ENCODE measurements at regions of chr12 and their contacts with region 1.

Region 1: GRCh38 chr12:56117778-56118687 is at the start of gene ZC3H10:
- DNase-seq: peak; percentile 89
- ATAC-seq: peak; percentile 76
- H3K4me3 Mint-ChIP-seq: peak within 1 kb of the TSS; percentile 100
- H3K27ac Mint-ChIP-seq: peak within 1 kb of the TSS; percentile 99
- H3K4me1 Mint-ChIP-seq: peaks cover 37% of the 10 kb centered on the region
- H3K27me3 Mint-ChIP-seq: no peaks in the 10 kb centered on the region
- CTCF ChIP-seq: no peak
- total RNA-seq, gene ZC3H10: 15.4 and 17.1 TPM in 2 replicates

Region 2: GRCh38 chr12:55973598-55974307 is 144.3 kb before region 1 on chr12 and contains the start of gene RAB5B:
- CTCF ChIA-PET with region 1: no interaction called
- POLR2A ChIA-PET with region 1: interaction called, 7 read pairs
- intact Hi-C with region 1: loop called (anchors 2 kb)
- DNase-seq: peak; percentile 83
- ATAC-seq: peak; percentile 87
- H3K4me3 Mint-ChIP-seq: no peak within 1 kb of the TSS
- H3K27ac Mint-ChIP-seq: no peak within 1 kb of the TSS
- H3K4me1 Mint-ChIP-seq: peaks cover 27% of the 10 kb centered on the region
- H3K27me3 Mint-ChIP-seq: no peaks in the 10 kb centered on the region
- CTCF ChIP-seq: no peak
- total RNA-seq, gene RAB5B: 82.1 and 83.8 TPM in 2 replicates

Region 3: GRCh38 chr12:55985341-55985740 is 132.7 kb before region 1 on chr12:
- CTCF ChIA-PET with region 1: no interaction called
- POLR2A ChIA-PET with region 1: no interaction called
- intact Hi-C with region 1: no loop called
- DNase-seq: no peak
- ATAC-seq: no peak
- H3K4me3 Mint-ChIP-seq: no peak overlapping the region
- H3K27ac Mint-ChIP-seq: no peak overlapping the region
- H3K4me1 Mint-ChIP-seq: peaks cover 25% of the 10 kb centered on the region
- H3K27me3 Mint-ChIP-seq: no peaks in the 10 kb centered on the region
- CTCF ChIP-seq: no peak

Region 4: GRCh38 chr12:56029666-56030293 is 88.3 kb before region 1 on chr12:
- CTCF ChIA-PET with region 1: no interaction called
- POLR2A ChIA-PET with region 1: no interaction called
- intact Hi-C with region 1: no loop called
- DNase-seq: no peak
- ATAC-seq: peak; percentile 71
- H3K4me3 Mint-ChIP-seq: no peak overlapping the region
- H3K27ac Mint-ChIP-seq: no peak overlapping the region
- H3K4me1 Mint-ChIP-seq: no peaks in the 10 kb centered on the region
- H3K27me3 Mint-ChIP-seq: no peaks in the 10 kb centered on the region
- CTCF ChIP-seq: no peak

Region 5: DNA sequence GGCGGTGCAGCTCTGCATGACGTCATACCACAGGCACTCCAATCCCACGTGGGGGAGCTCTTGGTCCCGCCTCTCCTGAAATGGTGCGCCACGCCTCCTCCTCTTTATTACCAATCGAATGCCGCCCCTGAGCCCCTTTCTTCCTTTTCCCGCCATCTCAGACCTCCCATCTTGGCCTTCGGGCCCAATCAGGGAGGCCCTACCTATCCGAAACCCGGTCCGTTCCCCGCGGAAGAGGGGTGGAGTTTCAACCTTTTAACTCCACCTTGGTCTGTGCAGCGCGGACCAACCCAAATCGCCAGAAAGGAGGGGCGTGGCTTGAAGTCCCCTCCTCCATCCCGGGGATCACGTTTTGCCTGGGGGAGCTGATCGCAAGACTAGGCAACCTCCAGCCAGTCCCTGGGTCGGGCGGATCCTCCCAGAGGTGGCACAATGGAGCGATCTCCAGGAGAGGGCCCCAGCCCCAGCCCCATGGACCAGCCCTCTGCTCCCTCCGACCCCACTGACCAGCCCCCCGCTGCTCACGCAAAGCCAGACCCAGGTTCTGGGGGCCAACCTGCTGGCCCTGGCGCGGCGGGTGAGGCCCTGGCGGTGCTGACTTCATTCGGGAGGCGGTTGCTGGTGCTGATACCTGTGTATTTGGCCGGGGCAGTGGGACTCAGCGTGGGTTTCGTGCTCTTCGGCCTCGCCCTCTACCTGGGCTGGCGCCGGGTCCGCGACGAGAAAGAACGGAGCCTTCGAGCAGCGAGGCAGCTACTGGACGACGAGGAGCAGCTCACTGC is 10.0 kb after region 1 on chr12 and contains the start of gene ESYT1:
- CTCF ChIA-PET with region 1: interaction called, 18 read pairs
- POLR2A ChIA-PET with region 1: interaction called, 104 read pairs
- intact Hi-C with region 1: loop called (anchors 1 kb)
- DNase-seq: peak; percentile 83
- ATAC-seq: peak; percentile 86
- H3K4me3 Mint-ChIP-seq: peak within 1 kb of the TSS; percentile 97
- H3K27ac Mint-ChIP-seq: peak within 1 kb of the TSS; percentile 98
- H3K4me1 Mint-ChIP-seq: peaks cover 69% of the 10 kb centered on the region
- H3K27me3 Mint-ChIP-seq: no peaks in the 10 kb centered on the region
- CTCF ChIP-seq: no peak
- total RNA-seq, gene ESYT1: 120 and 137 TPM in 2 replicates

Region 6: GRCh38 chr12:56224102-56224701 is 106.2 kb after region 1 on chr12 and contains the start of gene NABP2:
- CTCF ChIA-PET with region 1: interaction called, 34 read pairs
- POLR2A ChIA-PET with region 1: interaction called, 49 read pairs
- intact Hi-C with region 1: loop called (anchors 1 kb)
- DNase-seq: peak; percentile 88
- ATAC-seq: peak; percentile 72
- H3K4me3 Mint-ChIP-seq: peak within 1 kb of the TSS; percentile 99
- H3K27ac Mint-ChIP-seq: peak within 1 kb of the TSS; percentile 98
- H3K4me1 Mint-ChIP-seq: peaks cover 48% of the 10 kb centered on the region
- H3K27me3 Mint-ChIP-seq: no peaks in the 10 kb centered on the region
- CTCF ChIP-seq: peak; percentile 67
- total RNA-seq, gene NABP2: 27.7 and 31.4 TPM in 2 replicates

Region 7: GRCh38 chr12:56307221-56307965 is 189.4 kb after region 1 on chr12:
- CTCF ChIA-PET with region 1: no interaction called
- POLR2A ChIA-PET with region 1: no interaction called
- intact Hi-C with region 1: no loop called
- DNase-seq: no peak
- ATAC-seq: no peak
- H3K4me3 Mint-ChIP-seq: no peak overlapping the region
- H3K27ac Mint-ChIP-seq: no peak overlapping the region
- H3K4me1 Mint-ChIP-seq: peaks cover 1% of the 10 kb centered on the region
- H3K27me3 Mint-ChIP-seq: no peaks in the 10 kb centered on the region
- CTCF ChIP-seq: no peak

Region 8: GRCh38 chr12:56333679-56334489 is 215.9 kb after region 1 on chr12 and contains the start of gene PAN2:
- CTCF ChIA-PET with region 1: no interaction called
- POLR2A ChIA-PET with region 1: interaction called, 6 read pairs
- intact Hi-C with region 1: loop called (anchors 1 kb)
- DNase-seq: peak; percentile 85
- ATAC-seq: peak; percentile 91
- H3K4me3 Mint-ChIP-seq: peak within 1 kb of the TSS; percentile 96
- H3K27ac Mint-ChIP-seq: peak within 1 kb of the TSS; percentile 100
- H3K4me1 Mint-ChIP-seq: peaks cover 46% of the 10 kb centered on the region
- H3K27me3 Mint-ChIP-seq: no peaks in the 10 kb centered on the region
- CTCF ChIP-seq: no peak
- total RNA-seq, gene PAN2: 86.3 and 98.9 TPM in 2 replicates

Region 9: DNA sequence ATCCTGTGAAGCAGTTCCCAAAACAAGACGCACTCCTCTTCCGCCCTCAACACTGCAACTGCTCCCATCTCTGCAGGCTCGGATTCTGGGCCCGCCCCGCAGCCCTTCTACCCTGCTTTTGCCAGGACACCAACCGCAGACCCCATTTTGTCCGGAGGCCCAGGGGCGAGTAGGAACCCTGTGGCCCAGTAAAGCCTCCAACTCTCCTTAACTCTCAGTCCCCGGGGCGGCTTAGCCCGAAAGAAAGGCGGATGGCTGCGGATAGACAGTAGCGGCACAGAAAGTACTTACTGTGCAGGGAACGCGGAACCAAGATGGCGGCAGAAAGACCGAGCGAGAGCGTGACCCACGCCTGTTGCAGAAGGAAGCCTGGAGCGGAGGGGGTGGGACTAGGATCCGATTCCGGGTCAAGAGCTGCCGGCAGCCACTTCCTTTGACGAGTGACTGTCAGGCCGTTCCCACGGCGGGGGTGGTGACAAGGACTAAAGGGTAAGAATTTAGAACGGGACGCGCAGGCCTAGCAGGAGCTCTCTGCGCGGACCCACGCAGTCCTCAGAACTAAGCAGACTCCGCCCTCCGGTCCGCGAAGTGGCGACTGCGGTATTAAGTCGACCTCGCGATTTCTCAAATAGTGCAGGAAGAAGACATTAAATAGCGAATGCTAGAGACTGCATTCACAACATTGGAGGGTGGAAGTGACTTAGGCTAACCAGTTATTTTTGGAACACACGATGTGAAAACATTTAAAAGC is 607.1 kb after region 1 on chr12 and contains the start of gene NACA:
- CTCF ChIA-PET with region 1: no interaction called
- POLR2A ChIA-PET with region 1: interaction called, 3 read pairs
- intact Hi-C with region 1: loop called (anchors 5 kb)
- DNase-seq: peak; percentile 90
- ATAC-seq: peak; percentile 95
- H3K4me3 Mint-ChIP-seq: peak within 1 kb of the TSS; percentile 99
- H3K27ac Mint-ChIP-seq: peak within 1 kb of the TSS; percentile 98
- H3K4me1 Mint-ChIP-seq: peaks cover 52% of the 10 kb centered on the region
- H3K27me3 Mint-ChIP-seq: no peaks in the 10 kb centered on the region
- CTCF ChIP-seq: no peak
- total RNA-seq, gene NACA: 1,104 and 1,342 TPM in 2 replicates

Measured in activated B cell treated with CpG ODN at 0.5 μM for 24 hours (primary cell).